Mammary epithelial cell (primary cell): ENCODE measurements at regions of chr5 and their contacts with region 1.

Region 1: GRCh38 chr5:87099246-87099925 is 168.3 kb upstream of the RASA1 start:
- DNase-seq: peak; percentile 79
- H3K4me3 ChIP-seq: no peak overlapping the region
- H3K27ac ChIP-seq: peak overlapping the region; percentile 77
- H3K4me1 ChIP-seq: peaks cover 20% of the 10 kb centered on the region
- H3K27me3 ChIP-seq: no peaks in the 10 kb centered on the region
- CTCF ChIP-seq: no peak

Region 2: DNA sequence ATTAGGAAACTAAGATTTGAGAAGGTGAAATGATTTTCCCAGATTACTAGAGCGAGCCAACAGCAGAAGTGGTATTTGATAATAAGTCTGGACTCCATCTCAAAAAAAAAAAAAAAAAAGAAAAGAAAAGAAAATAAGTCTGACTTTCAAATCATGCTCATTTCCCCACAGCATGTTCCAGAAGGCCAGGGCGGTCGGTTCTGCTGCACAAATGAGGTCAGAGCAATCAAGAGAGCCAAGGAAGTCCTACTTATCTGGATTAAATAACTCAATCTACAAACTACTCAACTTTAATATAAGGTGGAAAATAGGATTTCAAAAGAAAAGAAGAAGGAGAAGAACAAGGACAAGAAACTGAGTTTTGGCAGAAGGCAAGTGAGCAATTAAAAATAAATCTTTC is 37.9 kb after region 1 on chr5:
- CTCF ChIA-PET with region 1: no interaction called
- dilution Hi-C with region 1: loop called (anchors 5 kb)
- in situ Hi-C with region 1: no loop called
- intact Hi-C with region 1: no loop called
- DNase-seq: no peak
- H3K4me3 ChIP-seq: no peak overlapping the region
- H3K27ac ChIP-seq: no peak overlapping the region
- H3K4me1 ChIP-seq: peaks cover 27% of the 10 kb centered on the region
- H3K27me3 ChIP-seq: no peaks in the 10 kb centered on the region
- CTCF ChIP-seq: no peak